ENCODE measurements at regions of chr5 and their contacts with region 1.

Region 1: GRCh38 chr5:93415819-93416218 is 165.2 kb downstream of the NR2F1-AS1 start:
- DNase-seq: no peak
- H3K4me3 ChIP-seq: no peak overlapping the region
- H3K27ac ChIP-seq: no peak overlapping the region
- H3K4me1 ChIP-seq: no peaks in the 10 kb centered on the region
- H3K27me3 ChIP-seq: no peaks in the 10 kb centered on the region
- CTCF ChIP-seq: no peak

Region 2: GRCh38 chr5:93381057-93381456 is 34.8 kb before region 1 on chr5:
- CTCF ChIA-PET with region 1: no interaction called
- dilution Hi-C with region 1: loop called (anchors 5 kb)
- in situ Hi-C with region 1: no loop called
- intact Hi-C with region 1: no loop called
- DNase-seq: no peak
- H3K4me3 ChIP-seq: no peak overlapping the region
- H3K27ac ChIP-seq: no peak overlapping the region
- H3K4me1 ChIP-seq: peaks cover 9% of the 10 kb centered on the region
- H3K27me3 ChIP-seq: no peaks in the 10 kb centered on the region
- CTCF ChIP-seq: no peak

Measured in mammary epithelial cell (primary cell).